HepG2 (cell line): ENCODE measurements at regions of chr22 and their contacts with region 1.

Region 1: DNA sequence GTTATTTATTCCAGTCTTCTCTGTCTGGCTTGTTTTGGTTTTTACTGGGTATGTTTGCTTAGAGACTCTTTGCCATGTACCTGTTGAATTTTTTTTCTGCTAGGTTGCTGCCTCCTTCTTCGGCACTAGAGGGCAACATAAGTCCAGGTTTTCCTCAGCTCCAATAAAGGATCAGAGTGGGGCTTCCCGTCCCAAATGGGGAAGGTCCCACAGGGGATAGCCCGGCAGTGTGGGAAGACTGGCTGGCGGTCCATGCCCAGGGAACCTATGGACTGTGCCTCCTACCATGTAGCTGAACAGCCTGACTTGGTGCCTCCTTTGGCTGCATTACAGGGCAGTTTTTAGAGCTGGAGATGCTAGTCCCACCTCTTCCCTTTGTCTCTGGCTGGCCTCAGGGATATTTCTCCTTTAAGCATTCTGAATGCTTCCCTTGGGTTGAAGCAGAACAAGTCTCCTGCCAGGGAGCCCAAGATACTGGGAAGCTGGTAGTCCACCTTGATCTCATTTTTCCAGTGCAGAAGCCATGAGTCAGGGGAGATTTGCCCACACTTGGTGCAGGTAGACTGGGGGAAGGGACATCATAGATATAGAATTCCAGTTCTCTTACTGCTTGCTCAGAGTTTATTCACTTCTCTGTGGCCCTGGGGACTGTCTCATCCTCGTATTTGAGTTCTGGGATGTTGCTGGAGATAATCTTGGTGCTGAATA is 60.2 kb downstream of the BRD1 start:
- DNase-seq: peak; percentile 58
- ATAC-seq: peak; percentile 18
- H3K4me3 ChIP-seq: no peak overlapping the region
- H3K27ac ChIP-seq: no peak overlapping the region
- H3K4me1 ChIP-seq: no peaks in the 10 kb centered on the region
- H3K27me3 ChIP-seq: peaks cover 0 to 1% of the 10 kb centered on the region in 2 experiments; a peak in 2 of 5 replicates
- CTCF ChIP-seq: peak; percentile 87
- EP300 ChIP-seq: no peak
- POLR2A ChIP-seq: no peak
- RAD21 ChIP-seq: peak; percentile 75

Region 2: GRCh38 chr22:49917974-49918910 is 150.7 kb after region 1 on chr22 and contains the starts of genes ALG12 and CRELD2:
- CTCF ChIA-PET with region 1: no interaction called
- POLR2A ChIA-PET with region 1: no interaction called
- in situ Hi-C with region 1: loop called (anchors 5 kb)
- intact Hi-C with region 1: loop called (anchors 2 kb)
- DNase-seq: peak; percentile 91
- ATAC-seq: peak; percentile 96
- H3K4me3 ChIP-seq: peak within 1 kb of the TSS; percentile 82 to 85 (median 83)
- H3K27ac ChIP-seq: peak within 1 kb of the TSS; percentile 93
- H3K4me1 ChIP-seq: peaks cover 26% of the 10 kb centered on the region
- H3K27me3 ChIP-seq: no peaks in the 10 kb centered on the region
- CTCF ChIP-seq: peak; percentile 26; the same call in 1 of the 2 replicates
- EP300 ChIP-seq: no peak
- POLR2A ChIP-seq: peak; percentile 77 to 89
- RAD21 ChIP-seq: peak; percentile 39
- total RNA-seq, gene ALG12: 6.6 and 15.8 TPM in 2 replicates
- total RNA-seq, gene CRELD2: 19.6 and 44.7 TPM in 2 replicates

Region 3: GRCh38 chr22:49923445-49923844 is 155.9 kb after region 1 on chr22:
- CTCF ChIA-PET with region 1: no interaction called
- POLR2A ChIA-PET with region 1: no interaction called
- in situ Hi-C with region 1: loop called (anchors 5 kb)
- intact Hi-C with region 1: loop called (anchors 2 kb)
- DNase-seq: no peak
- ATAC-seq: no peak
- H3K4me3 ChIP-seq: no peak overlapping the region
- H3K27ac ChIP-seq: no peak overlapping the region
- H3K4me1 ChIP-seq: peaks cover 15% of the 10 kb centered on the region
- H3K27me3 ChIP-seq: no peaks in the 10 kb centered on the region
- CTCF ChIP-seq: peak; percentile 31; the same call in 1 of the 2 replicates
- EP300 ChIP-seq: no peak
- POLR2A ChIP-seq: no peak
- RAD21 ChIP-seq: no peak

Region 4: GRCh38 chr22:50030297-50031188 is 263.0 kb after region 1 on chr22:
- CTCF ChIA-PET with region 1: no interaction called
- POLR2A ChIA-PET with region 1: no interaction called
- in situ Hi-C with region 1: loop called (anchors 5 kb)
- intact Hi-C with region 1: loop called (anchors 10 kb)
- DNase-seq: peak; percentile 44
- ATAC-seq: peak; percentile 93
- H3K4me3 ChIP-seq: peak overlapping the region in 1 of 3 experiments; percentile 16; a peak in 1 of 6 replicates
- H3K27ac ChIP-seq: no peak overlapping the region
- H3K4me1 ChIP-seq: no peaks in the 10 kb centered on the region
- H3K27me3 ChIP-seq: peaks cover 8 to 63% of the 10 kb centered on the region in 2 experiments
- CTCF ChIP-seq: peak; percentile 96
- EP300 ChIP-seq: no peak
- POLR2A ChIP-seq: no peak
- RAD21 ChIP-seq: peak; percentile 99

Region 5: GRCh38 chr22:50148991-50149721 is 381.6 kb after region 1 on chr22:
- CTCF ChIA-PET with region 1: no interaction called
- POLR2A ChIA-PET with region 1: no interaction called
- in situ Hi-C with region 1: no loop called
- intact Hi-C with region 1: loop called (anchors 5 kb)
- DNase-seq: peak; percentile 46
- ATAC-seq: peak; percentile 37
- H3K4me3 ChIP-seq: no peak overlapping the region; a peak in 1 of 6 replicates
- H3K27ac ChIP-seq: no peak overlapping the region
- H3K4me1 ChIP-seq: peaks cover 70% of the 10 kb centered on the region
- H3K27me3 ChIP-seq: peaks cover 0 to 43% of the 10 kb centered on the region in 2 experiments; a peak in 4 of 5 replicates
- CTCF ChIP-seq: peak; percentile 92
- EP300 ChIP-seq: no peak
- POLR2A ChIP-seq: no peak
- RAD21 ChIP-seq: peak; percentile 92